Head of caudate nucleus (tissue), 42 donors: ENCODE measurements at regions of chr4 and their contacts with region 1.

Region 1: DNA sequence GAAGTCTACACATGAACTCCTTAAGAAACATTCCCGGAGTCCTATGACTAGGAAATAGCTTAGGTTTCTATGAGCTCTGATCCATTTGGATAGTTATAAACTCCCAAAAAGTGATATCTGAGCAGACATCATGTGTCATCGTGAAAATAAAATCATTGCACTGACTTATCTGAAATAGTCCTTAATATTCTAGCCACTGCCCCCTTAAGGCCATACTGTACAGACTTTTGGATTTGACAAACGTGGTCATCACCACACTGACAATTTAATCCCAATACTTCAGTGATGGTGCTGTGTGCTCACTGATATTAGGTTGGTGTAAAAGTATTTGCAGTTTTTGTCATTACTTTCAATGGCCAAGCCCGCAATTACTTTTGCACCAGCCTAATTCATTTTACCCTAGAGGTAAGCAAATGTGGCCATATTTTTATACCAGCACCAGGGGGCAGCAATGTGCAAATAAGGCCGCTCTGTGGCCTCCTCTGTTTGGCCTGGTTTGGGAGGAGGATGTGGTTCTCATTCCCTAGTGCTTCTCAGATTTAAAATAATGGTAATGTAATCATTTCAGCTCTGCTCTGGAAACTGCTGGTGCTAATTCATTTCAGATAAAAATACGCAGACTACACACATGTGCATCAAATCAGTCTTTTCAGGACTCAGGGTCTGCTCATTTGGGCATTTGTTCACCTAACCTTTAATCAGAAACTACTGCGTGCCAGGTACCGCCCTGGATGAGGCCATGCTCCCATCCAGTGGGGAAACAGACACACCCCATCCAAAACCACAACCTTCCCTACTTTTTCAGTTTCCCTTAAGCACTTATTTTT is 196.4 kb upstream of the C1QTNF7 start:
- DNase-seq: peak; percentile 40 to 93 (median 76)

Region 2: DNA sequence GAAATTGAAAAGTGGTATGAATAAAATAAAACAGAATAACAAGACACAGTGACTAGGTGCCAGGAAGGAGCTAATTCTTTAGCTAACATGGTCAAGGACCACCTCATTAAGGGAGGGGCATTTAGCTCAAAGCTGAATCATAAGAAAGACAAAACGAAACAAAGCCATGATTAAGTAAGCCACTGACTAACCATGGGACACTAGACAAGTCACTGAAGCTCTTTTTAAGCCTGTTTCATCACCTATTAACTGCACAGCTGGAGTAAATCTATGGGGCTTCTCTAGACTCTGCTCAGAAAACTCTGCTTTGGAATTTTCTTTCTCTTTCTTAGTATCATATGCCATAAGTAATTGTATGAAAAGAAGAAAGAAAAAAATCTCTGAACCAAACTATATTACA is 146.6 kb after region 1 on chr4:
- intact Hi-C with region 1: no loop called
- DNase-seq: no peak

Region 3: GRCh38 chr4:15396157-15396800 is 164.8 kb after region 1 on chr4:
- intact Hi-C with region 1: loop called (anchors 10 kb)
- DNase-seq: peak in 34 of 42 donors; percentile 14 to 74 (median 34)

Region 4: DNA sequence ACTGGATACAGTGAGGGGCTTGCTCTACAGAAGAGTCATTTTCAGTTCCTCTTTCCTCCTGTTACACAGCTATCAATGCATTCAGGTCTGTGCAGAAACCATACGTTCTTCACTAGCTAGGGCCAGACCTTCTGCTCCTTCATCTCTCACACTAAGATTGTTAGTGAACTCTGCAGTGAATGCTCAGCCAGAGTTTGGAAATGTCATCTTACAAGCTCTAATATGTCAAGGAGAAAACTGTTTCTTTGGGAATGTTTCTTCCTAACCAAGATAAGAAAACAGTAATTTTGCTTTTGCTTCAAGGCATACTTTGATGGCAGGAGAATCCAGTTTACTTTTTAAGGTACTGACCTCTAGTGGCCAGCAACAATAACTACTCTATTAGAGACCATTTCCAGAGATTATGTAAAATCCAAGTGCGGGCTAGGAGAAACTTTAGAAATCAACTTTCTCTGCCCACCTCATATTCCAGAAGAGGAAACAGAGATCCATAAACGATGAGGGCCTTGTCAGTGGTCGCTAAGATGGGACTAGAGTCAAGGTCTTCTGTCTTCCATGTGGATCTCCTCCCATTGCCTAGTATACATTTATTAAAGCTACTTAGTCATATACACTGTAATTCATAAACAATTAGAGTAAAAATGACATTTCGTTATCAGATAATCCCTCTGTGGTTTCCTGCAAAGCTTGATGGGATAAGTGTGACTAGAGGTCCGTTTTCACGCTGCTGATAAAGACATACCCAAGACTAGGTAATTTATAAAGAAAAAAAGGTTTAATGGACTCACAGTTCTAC is 226.1 kb after region 1 on chr4:
- intact Hi-C with region 1: loop called (anchors 5 kb)
- DNase-seq: peak in 2 of 42 donors; percentile 8 to 55